Posterior cingulate gyrus (tissue), 11 donors: ENCODE measurements at regions of chr15 and their contacts with region 1.

Region 1: GRCh38 chr15:29668120-29668602 is 154.1 kb downstream of the TJP1 start:
- DNase-seq: peak in 8 of 10 donors; percentile 59 to 96 (median 72)

Region 2: DNA sequence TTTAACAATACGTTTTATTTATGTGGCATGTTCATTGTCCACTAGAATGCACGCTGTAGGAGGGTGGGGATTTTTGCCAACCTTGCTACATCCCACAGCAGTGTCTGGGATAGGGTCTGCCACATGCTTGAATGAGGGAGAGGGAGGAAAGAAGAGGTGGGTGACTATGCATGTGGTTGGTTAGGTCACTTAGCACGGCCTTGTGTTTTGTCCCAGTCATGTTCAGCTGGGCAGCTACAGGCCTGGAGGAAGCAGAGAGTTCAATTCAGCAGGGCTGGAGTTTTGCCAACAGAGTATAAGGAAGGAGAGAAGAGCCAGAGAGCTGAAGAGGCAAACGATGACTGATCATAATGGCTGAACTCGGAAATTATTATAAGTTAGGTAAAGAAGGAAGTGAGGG is 130.1 kb before region 1 on chr15:
- intact Hi-C with region 1: no loop called
- DNase-seq: no peak

Region 3: DNA sequence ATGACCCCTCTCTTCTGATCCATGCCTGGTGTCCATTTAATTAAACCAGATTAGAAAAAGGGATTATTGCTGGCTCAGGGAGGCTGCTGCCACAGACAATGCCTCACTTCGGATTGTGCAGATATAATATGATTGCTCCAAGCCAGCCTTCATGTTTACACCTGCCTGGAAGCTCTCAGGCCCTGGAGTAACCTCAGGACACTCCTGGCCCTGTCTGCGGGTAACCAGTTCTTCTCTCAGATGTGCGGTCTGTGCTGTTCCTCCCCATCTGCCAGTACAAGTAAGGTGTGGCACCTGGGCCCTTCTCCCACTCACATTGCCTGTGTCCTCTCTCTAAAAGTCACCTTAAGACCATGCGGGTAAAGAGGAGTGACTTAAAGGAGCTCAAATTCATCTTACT is 405.8 kb after region 1 on chr15:
- intact Hi-C with region 1: loop called (anchors 5 kb)
- DNase-seq: no peak